A673 (cell line): ENCODE measurements at regions of chr17 and their contacts with region 1.

Region 1: GRCh38 chr17:28951991-28952975 is 965 bp upstream of the PHF12 start:
- DNase-seq: peak; percentile 100
- H3K4me3 ChIP-seq: peak overlapping the region; percentile 88
- H3K27ac ChIP-seq: peak overlapping the region; percentile 95
- H3K4me1 ChIP-seq: peaks cover 23% of the 10 kb centered on the region
- H3K27me3 ChIP-seq: no peaks in the 10 kb centered on the region
- CTCF ChIP-seq: no peak

Region 2: GRCh38 chr17:27367121-27367991 is 1584.9 kb before region 1 on chr17:
- CTCF ChIA-PET with region 1: no interaction called
- POLR2A ChIA-PET with region 1: no interaction called
- intact Hi-C with region 1: no loop called
- DNase-seq: no peak
- H3K4me3 ChIP-seq: no peak overlapping the region
- H3K27ac ChIP-seq: no peak overlapping the region
- H3K4me1 ChIP-seq: no peaks in the 10 kb centered on the region
- H3K27me3 ChIP-seq: no peaks in the 10 kb centered on the region
- CTCF ChIP-seq: no peak

Region 3: DNA sequence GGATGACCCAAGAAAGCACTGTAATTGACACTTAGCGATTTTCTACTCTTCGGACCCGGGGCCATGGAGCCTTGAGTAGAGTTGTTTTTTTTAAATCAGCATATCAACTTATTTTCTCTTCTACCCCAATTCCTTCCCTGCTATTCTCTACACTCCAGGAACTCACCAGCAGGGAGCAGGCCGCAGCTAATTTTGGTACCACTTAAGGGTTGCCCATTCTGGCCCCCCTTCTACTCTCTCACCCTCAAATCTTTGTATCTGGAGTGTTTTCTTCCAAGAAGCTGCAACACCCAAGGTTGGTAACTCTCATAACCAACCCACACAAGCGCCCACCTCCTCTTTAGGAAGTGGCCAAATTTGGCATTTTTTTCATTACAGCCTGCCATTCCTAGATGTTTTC is 103.0 kb before region 1 on chr17:
- CTCF ChIA-PET with region 1: interaction called, 11 read pairs
- POLR2A ChIA-PET with region 1: no interaction called
- intact Hi-C with region 1: no loop called
- DNase-seq: peak; percentile 63
- H3K4me3 ChIP-seq: no peak overlapping the region
- H3K27ac ChIP-seq: no peak overlapping the region
- H3K4me1 ChIP-seq: peaks cover under 1% of the 10 kb centered on the region
- H3K27me3 ChIP-seq: no peaks in the 10 kb centered on the region
- CTCF ChIP-seq: peak; percentile 43

Region 4: GRCh38 chr17:28920201-28920600 is 32.1 kb before region 1 on chr17:
- CTCF ChIA-PET with region 1: no interaction called
- POLR2A ChIA-PET with region 1: no interaction called
- intact Hi-C with region 1: no loop called
- DNase-seq: no peak
- H3K4me3 ChIP-seq: no peak overlapping the region
- H3K27ac ChIP-seq: no peak overlapping the region
- H3K4me1 ChIP-seq: no peaks in the 10 kb centered on the region
- H3K27me3 ChIP-seq: no peaks in the 10 kb centered on the region
- CTCF ChIP-seq: no peak